Sciatic nerve (tissue), 2 donors: ENCODE measurements at regions of chr3 and their contacts with region 1.

Region 1: DNA sequence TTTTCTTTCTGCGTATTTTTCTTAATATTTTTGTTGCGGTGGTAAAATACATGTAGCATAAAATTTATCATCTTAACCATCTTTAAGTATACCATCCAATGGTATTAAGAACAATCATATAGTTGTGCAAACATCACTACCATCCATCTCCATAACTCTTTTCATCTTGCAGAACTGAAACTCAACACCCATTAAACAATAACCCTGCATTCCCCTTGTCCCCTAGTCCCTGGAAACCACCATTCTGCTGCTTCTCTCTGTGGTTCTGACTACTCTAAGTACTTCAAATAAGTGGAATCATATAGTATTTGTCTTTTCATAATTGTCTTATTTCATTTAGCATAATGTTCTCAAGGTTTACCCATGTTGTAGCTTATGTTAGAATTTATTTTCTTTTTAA is 67.3 kb upstream of the EOMES start:
- DNase-seq: no peak
- ATAC-seq: no peak

Region 2: DNA sequence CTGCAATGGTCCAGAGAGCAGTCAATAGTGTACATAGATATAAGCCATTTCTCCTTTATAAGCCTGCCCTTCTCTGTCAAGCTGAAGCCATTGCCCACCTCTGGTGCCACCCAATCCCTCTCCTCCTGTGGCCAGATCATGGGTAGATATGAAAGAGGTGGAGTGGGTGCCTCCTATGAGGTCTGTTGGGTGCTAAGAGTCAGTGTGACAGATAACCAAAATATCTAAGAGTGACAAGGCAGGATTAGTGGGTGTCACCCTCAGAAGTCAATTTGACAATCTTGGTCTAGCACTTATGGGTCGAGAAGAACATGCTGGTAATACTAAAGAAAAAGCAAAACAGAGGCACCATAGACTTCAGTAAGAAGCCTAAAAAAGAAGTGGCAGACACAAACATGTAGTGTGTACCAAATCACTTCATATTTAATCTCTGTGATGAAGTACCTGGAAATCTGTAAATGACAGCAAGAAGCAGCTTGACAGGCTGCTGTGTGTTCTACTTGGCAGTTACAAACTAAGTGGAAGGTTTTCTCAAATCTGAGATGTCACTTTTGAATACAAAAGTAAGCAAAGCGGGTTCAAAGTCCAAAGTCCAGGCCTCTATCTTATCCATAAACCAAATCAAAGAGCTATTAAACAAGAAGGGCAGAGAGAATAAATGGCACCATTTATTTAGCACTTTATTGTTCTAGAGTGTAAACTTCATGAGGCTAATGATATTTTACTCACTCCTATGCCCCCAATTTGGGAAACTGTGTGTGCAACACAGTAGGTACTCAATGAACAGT is 51.6 kb after region 1 on chr3:
- intact Hi-C with region 1: no loop called
- DNase-seq: no peak
- ATAC-seq: no peak

Region 3: GRCh38 chr3:28109829-28110228 is 320.4 kb after region 1 on chr3:
- intact Hi-C with region 1: loop called (anchors 5 kb)
- DNase-seq: no peak
- ATAC-seq: no peak